Right ventricle myocardium inferior (tissue), 1 donor: ENCODE measurements at regions of chr4 and their contacts with region 1.

Region 1: GRCh38 chr4:38730830-38731646 is 51.8 kb downstream of the TLR10 start:
- DNase-seq: peak; percentile 92
- ATAC-seq: peak; percentile 85

Region 2: DNA sequence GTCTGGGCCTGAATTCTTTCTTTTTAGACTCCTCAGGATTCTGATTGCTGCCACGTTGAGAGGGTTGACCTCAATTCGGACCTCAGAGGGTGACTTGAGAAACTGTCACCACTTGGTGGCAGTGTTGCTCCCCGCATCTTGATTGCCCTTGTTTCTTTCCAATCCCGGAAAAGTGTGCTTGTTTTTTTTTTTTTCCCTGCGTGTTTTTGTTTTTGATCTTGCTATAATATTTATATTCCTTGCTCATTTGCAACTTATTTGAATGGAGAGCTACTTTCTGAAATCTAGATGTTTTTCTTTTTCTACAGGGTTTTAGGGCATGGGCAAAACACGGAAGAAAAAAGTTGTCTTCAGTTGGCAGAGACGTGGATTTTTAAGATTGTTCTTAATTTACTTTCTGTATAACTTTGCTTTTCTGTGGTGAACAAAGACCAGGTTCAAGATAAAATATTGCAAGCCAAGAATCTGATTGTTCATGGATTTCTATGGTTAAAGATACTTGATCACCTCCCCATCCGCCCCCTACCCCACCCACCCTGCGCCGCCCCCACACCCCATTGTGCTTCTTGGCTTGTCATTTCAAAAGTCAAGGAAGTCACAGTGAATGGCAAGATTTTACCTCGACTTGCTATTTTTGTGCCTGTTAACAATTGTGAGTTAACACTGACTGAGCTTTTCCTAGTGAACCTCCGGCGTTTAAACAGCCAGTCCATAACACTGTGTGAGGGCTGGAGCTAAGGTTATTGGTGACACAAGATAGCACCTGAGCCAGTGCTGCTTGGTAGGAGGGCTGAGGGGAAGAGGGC is 668.7 kb before region 1 on chr4:
- intact Hi-C with region 1: loop called (anchors 1 kb)
- DNase-seq: no peak
- ATAC-seq: peak; percentile 77

Region 3: DNA sequence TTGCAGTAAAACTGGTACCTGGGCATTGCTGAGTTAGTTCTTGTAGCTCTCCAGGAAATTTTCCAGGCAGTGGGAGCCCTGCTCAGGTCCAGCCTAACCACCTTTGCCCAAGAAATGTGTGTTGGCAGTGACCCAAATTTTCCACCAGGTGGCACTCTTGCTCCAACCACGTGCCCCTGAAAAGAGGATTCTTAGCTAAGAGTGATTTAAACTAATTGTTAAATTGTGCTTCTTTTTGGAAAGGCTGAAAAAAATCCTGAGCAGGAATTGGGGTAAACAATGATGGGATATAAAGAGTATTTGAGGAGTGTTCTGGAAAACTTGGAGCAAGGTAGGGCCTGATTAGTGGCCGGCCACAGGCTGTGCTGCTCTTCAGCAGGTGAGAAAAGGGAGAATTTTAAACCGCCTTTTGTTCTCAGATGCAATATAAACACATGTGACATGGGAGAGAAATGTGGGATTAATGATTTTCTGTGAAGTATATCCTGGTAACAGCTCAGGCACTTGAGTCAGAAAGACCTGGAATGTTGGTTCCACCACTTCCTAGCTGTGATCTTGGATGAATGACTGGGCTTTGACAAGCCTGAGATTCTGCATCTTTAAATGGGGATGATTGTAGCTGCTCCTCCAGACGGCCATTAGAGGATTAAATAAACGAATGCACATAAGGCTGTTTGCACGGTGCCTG is 551.2 kb before region 1 on chr4:
- intact Hi-C with region 1: loop called (anchors 1 kb)
- DNase-seq: no peak
- ATAC-seq: peak; percentile 51